Prostate gland (tissue), 2 donors: ENCODE measurements at regions of chr13 and their contacts with region 1.

Region 1: GRCh38 chr13:100514788-100515409 is 73.7 kb downstream of the GGACT start:
- DNase-seq: peak; percentile 76
- H3K4me3 ChIP-seq: no peak overlapping the region
- H3K27ac ChIP-seq: no peak overlapping the region
- H3K4me1 ChIP-seq: no peaks in the 10 kb centered on the region
- H3K27me3 ChIP-seq: no peaks in the 10 kb centered on the region
- CTCF ChIP-seq: peak; percentile 69 to 85 (median 74)
- POLR2A ChIP-seq: no peak

Region 2: DNA sequence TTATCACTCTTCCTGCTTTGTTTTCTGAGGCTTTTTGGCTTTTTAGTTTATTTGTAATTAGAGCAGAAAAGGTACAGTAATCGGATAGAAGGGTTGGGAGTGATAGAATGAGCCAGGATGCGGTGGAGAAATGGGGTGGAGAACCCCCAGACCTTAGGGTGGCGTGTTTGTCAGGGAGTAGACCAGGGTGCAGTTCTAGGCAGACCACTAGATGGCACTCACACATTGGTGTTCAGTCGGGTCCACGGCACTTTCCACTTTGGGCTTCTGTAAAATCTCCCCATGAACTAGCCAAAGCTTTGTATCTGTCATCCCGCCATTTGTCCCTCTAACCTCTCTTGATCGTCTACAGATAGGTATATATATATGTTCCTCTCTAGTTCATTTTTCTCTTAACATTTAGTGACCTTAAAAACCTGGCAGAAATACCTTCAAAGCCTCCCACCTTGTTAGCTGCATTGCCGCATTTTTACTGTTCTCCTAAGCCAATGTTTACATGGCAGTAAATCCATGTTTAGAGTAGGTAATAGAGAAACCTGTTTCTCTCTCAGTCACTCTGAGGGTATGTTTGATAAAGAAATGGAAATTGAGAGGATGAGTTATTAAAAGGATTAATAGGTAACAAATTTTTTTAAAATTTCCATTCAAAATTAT is 858.7 kb before region 1 on chr13:
- intact Hi-C with region 1: loop called (anchors 1 kb)
- DNase-seq: peak; percentile 81
- H3K4me3 ChIP-seq: no peak overlapping the region
- H3K27ac ChIP-seq: no peak overlapping the region
- H3K4me1 ChIP-seq: no peaks in the 10 kb centered on the region
- H3K27me3 ChIP-seq: no peaks in the 10 kb centered on the region
- CTCF ChIP-seq: peak; percentile 84 to 92 (median 88)
- POLR2A ChIP-seq: no peak

Region 3: DNA sequence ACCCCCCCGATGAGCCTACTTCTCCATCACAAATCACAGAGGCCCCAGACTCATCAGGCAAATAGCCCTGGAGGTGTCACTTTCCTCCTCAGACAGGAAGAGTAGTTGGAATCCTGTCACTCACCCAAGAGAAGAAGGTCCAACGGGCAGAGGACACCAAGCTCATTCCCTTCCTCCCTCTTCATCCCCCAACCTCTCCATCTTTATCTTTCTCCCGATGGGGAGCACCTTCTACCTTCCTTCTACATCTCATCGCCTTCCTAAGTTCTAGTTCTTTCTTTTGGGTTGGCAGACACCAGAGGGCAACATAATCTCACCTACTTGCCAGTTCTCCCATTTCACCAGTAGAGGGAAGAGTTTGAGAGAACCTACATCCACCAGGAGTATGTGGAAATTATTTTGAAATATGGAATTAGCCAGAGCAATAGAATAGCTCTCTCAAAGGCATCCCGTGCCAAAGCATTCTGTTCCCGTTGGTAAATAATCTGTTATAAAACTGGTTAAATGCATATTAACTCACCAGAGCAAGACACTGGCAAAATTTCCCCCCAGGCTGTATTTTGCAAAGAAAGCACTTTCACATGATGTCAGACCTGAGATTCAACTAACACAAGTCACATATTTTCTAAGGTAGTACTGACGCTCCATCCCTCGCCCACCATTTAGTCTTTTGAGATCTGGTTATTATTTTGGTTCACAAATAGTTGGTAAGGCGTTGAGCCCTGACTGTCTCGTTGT is 598.4 kb before region 1 on chr13:
- intact Hi-C with region 1: loop called (anchors 5 kb)
- DNase-seq: peak; percentile 23
- H3K4me3 ChIP-seq: no peak overlapping the region
- H3K27ac ChIP-seq: no peak overlapping the region
- H3K4me1 ChIP-seq: no peaks in the 10 kb centered on the region
- H3K27me3 ChIP-seq: no peaks in the 10 kb centered on the region
- CTCF ChIP-seq: peak; percentile 55 to 90 (median 82)
- POLR2A ChIP-seq: no peak

Region 4: GRCh38 chr13:99929866-99930265 is 585.0 kb before region 1 on chr13:
- intact Hi-C with region 1: no loop called
- DNase-seq: no peak
- H3K4me3 ChIP-seq: no peak overlapping the region
- H3K27ac ChIP-seq: no peak overlapping the region
- H3K4me1 ChIP-seq: no peaks in the 10 kb centered on the region
- H3K27me3 ChIP-seq: no peaks in the 10 kb centered on the region
- CTCF ChIP-seq: no peak
- POLR2A ChIP-seq: no peak